SK-N-SH (cell line): ENCODE measurements at regions of chr4 and their contacts with region 1.

Region 1: DNA sequence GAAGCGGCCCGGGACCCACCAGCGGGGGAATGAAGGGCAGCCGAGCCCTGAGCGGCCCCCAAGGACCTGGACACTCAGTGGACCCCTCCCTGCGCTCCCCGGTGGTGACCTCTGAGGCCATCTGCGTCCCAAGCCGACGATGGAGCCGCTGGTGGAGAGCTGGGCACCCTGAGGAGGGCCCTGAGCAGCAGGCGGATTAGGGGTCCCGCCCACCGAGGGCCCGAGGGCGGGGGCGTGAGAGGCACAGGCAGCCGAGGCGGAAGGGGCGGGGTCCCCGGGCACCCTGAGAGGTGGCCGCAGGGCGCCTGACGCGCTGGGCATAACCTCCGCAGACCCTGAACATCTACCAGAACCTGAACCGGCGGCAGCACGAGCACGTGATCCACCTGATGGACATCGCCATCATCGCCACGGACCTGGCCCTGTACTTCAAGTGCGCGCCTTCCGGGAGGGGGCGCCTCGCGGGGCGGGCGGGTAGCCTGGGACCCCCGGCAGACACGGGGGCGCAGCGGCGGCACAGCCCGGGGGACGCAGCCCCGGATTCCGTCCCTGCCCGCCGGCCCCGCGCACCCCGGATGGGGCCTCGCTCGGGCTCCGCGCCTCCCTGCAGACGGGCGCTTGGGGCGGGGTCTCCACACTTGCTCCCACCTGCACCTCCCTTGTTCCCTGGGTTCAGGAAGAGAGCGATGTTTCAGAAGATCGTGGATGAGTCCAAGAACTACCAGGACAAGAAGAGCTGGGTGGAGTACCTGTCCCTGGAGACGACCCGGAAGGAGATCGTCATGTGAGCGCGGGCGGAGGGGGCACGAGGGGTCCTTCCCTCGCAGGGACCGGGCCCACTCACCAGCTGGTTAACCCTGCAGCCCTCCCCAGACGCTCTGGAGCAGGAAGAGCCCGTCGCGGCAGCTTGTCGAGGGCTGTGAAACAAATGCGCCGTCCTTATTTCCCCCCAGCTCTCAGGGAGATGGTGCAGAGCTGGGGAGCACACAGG is 10.3 kb downstream of the ATP5ME start:
- DNase-seq: peak; percentile 95
- H3K4me3 ChIP-seq: peak overlapping the region; percentile 61 to 66; a peak in 3 of 4 replicates
- H3K27ac ChIP-seq: peak overlapping the region in 1 of 2 experiments; percentile 82; a peak in 2 of 4 replicates
- H3K4me1 ChIP-seq: peaks cover 0 to 22% of the 10 kb centered on the region in 2 experiments; a peak in 1 of 4 replicates
- H3K27me3 ChIP-seq: no peaks in the 10 kb centered on the region
- CTCF ChIP-seq: peak; percentile 21; the same call in 1 of the 2 replicates
- EP300 ChIP-seq: no peak
- RAD21 ChIP-seq: no peak

Region 2: GRCh38 chr4:384311-385010 is 279.3 kb before region 1 on chr4:
- CTCF ChIA-PET with region 1: no interaction called
- POLR2A ChIA-PET with region 1: no interaction called
- DNase-seq: no peak
- H3K4me3 ChIP-seq: no peak overlapping the region
- H3K27ac ChIP-seq: no peak overlapping the region
- H3K4me1 ChIP-seq: no peaks in the 10 kb centered on the region
- H3K27me3 ChIP-seq: no peaks in the 10 kb centered on the region
- CTCF ChIP-seq: no peak
- EP300 ChIP-seq: no peak
- RAD21 ChIP-seq: no peak

Region 3: DNA sequence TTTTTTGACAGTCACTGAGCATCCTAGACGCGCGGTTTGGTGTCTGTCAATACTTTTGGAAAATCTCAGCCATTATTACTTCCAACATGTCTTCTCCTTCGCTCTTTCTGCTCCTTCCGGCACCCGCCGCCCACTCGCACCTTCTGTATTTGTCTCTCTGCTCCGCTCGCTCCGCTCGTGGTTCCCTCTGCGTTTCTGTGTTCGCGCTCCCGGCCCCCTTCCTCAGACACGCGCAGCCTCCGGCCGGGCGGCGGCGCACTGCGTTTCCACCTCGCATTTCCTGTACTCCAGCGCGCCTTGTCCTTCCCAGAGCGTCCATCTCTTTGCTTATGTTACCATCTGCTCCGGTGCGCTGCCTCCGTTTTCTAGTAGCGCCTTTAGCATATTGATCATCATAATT is 17.3 kb before region 1 on chr4:
- CTCF ChIA-PET with region 1: no interaction called
- POLR2A ChIA-PET with region 1: no interaction called
- DNase-seq: no peak
- H3K4me3 ChIP-seq: no peak overlapping the region
- H3K27ac ChIP-seq: no peak overlapping the region
- H3K4me1 ChIP-seq: no peaks in the 10 kb centered on the region; a peak in 1 of 4 replicates
- H3K27me3 ChIP-seq: peaks cover 5% of the 10 kb centered on the region; the same call in 1 of the 2 replicates
- CTCF ChIP-seq: no peak
- EP300 ChIP-seq: no peak
- RAD21 ChIP-seq: no peak

Region 4: GRCh38 chr4:674172-675035 is 10.7 kb after region 1 on chr4 and contains the starts of genes ATP5ME and MYL5:
- CTCF ChIA-PET with region 1: interaction called, 3 read pairs
- POLR2A ChIA-PET with region 1: interaction called, 24 read pairs
- DNase-seq: peak; percentile 100
- H3K4me3 ChIP-seq: peak within 1 kb of the TSS; percentile 87 to 95
- H3K27ac ChIP-seq: peak within 1 kb of the TSS; percentile 63 to 84
- H3K4me1 ChIP-seq: peaks cover 6 to 22% of the 10 kb centered on the region in 2 experiments; a peak in 1 of 4 replicates
- H3K27me3 ChIP-seq: no peaks in the 10 kb centered on the region
- CTCF ChIP-seq: peak; percentile 82
- EP300 ChIP-seq: no peak
- RAD21 ChIP-seq: peak; percentile 49
- polyA plus RNA-seq, gene ATP5ME: 976 and 1,185 TPM in 2 replicates
- polyA plus RNA-seq, gene MYL5: 46.9 and 51.7 TPM in 2 replicates

Region 5: GRCh38 chr4:683982-684622 is 20.4 kb after region 1 on chr4:
- CTCF ChIA-PET with region 1: interaction called, 10 read pairs
- POLR2A ChIA-PET with region 1: interaction called, 5 read pairs
- DNase-seq: peak; percentile 90
- H3K4me3 ChIP-seq: peak overlapping the region in 1 of 2 experiments; percentile 36; a peak in 1 of 4 replicates
- H3K27ac ChIP-seq: peak overlapping the region in 1 of 2 experiments; percentile 62; a peak in 2 of 4 replicates
- H3K4me1 ChIP-seq: peaks cover 13 to 38% of the 10 kb centered on the region in 2 experiments; a peak in 3 of 4 replicates
- H3K27me3 ChIP-seq: no peaks in the 10 kb centered on the region
- CTCF ChIP-seq: peak; percentile 80
- EP300 ChIP-seq: no peak
- RAD21 ChIP-seq: peak; percentile 49